Heart left ventricle (tissue), 16 donors: ENCODE measurements at regions of chr11 and their contacts with region 1.

Region 1: GRCh38 chr11:12936200-12936599 is 72.9 kb upstream of the RASSF10 start:
- DNase-seq: no peak
- ATAC-seq: no peak
- H3K4me3 ChIP-seq: no peak overlapping the region
- H3K27ac ChIP-seq: no peak overlapping the region
- H3K4me1 ChIP-seq: no peaks in the 10 kb centered on the region
- H3K27me3 ChIP-seq: no peaks in the 10 kb centered on the region
- CTCF ChIP-seq: no peak
- POLR2A ChIP-seq: no peak

Region 2: DNA sequence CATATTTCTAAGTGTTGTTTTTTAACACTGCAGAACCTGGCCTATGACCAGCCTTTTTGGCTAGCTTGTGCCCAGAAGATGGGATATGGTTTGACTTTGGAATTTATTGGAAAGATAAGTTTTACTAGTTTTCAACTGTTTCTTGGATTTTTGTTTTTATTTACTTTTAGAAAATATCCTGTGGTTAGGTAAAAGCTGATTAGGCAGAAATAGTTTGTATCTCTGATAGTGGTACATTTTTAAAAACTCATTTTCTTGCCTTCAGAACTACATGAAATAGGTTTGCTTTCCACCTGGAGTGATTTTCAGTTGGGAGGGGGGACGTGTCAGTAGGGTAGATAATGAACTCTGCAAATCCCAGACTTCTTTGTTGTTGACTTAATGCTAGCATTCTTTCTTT is 18.4 kb before region 1 on chr11:
- intact Hi-C with region 1: loop called in 1 of 10 experiments (anchors 2 kb)
- DNase-seq: no peak
- ATAC-seq: no peak
- H3K4me3 ChIP-seq: no peak overlapping the region
- H3K27ac ChIP-seq: no peak overlapping the region
- H3K4me1 ChIP-seq: peaks cover 0 to 19% (median 5%) of the 10 kb centered on the region in 12 donors
- H3K27me3 ChIP-seq: no peaks in the 10 kb centered on the region
- CTCF ChIP-seq: no peak
- POLR2A ChIP-seq: no peak